Activated T-helper 1 cell treated with anti-CD3 and anti-CD28 coated beads, Interleukin-12 subunit alpha, Interleukin-12 subunit beta, Interleukin-2, Interleukin-4 antibody, amounts not matched to agents 30 ng/mL and 10 ng/mL and 1 ng/mL, durations not matched to agents 14 hours and 24 hours and 36 hours (primary cell): ENCODE measurements at regions of chr9 and their contacts with region 1.

Region 1: DNA sequence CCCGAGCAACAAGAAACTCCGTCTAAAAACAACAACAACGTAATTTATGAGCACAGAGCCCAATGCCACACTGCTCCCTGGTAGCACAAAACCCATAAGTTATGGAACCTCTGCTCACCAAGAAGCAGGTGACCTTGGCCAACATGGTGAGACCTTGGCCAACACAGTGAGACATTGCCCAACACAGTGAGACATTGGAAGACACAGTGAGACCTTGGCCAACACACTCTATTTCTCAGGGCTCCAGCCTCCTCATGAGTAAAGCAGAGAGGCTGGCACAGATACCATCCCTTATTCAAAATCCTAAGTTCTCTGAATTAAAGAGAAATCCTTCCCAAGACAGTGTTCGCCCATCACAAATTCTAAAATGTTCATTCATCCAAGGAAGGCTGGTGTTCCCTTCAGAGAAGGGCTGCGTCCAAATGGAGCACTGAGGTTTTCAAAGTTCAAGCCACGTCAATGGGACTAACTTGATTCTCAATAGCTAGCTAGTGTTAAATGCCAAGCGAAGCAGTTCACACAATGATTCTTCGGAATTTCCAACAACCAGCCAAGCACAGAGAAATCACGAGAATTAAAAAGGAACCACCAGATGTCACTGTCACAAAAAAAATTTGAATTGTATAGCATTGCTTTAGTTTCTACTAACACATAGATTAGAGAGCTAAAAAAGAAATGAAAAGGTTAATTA is 29.5 kb downstream of the TTC39B start:
- DNase-seq: no peak
- H3K4me3 Mint-ChIP-seq: no peak overlapping the region
- H3K27ac Mint-ChIP-seq: peak overlapping the region; percentile 60
- H3K4me1 Mint-ChIP-seq: peaks cover 28% of the 10 kb centered on the region
- H3K27me3 Mint-ChIP-seq: no peaks in the 10 kb centered on the region

Region 2: DNA sequence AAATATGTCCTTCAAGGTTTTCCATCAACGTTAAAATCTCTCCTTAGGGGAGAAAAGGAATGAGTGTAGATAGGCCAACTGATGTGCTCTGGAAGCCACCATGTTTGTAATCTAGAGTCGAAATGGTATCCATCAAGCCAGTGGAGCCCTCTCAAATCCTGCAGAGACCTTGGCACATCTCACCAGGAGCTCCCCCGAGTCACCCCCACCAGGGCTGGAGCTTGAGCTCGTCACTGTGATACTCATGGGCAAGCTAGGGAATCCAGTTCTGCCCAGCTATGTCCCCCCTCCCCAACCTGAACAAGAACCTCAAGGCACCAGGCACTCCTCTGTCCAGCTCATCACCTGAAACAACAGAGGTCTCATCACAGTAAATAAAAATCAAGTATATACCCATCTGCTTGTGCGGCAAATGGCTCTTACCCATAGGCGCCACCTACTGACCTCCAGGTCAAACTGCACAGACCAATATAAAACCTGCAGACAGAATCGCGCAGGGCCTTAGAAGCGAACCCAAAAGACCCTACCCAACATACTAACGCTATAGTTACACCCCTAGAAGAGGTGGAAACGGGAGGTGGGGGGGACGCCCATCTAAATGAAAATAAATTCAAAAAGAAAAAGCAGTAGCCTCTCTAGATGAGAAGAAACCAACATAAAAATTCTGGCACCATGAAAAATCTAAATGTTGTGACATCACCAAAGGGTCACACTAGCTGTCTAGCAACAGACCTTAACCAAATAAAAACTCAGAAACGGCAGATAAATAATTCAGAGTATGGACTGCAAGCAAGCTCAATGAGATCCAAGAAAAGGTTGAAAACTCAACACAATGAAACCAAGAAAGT is 45.5 kb before region 1 on chr9:
- intact Hi-C with region 1: loop called (anchors 5 kb)
- DNase-seq: no peak
- H3K4me3 Mint-ChIP-seq: no peak overlapping the region
- H3K27ac Mint-ChIP-seq: peak overlapping the region; percentile 37
- H3K4me1 Mint-ChIP-seq: peaks cover 35% of the 10 kb centered on the region
- H3K27me3 Mint-ChIP-seq: no peaks in the 10 kb centered on the region

Region 3: DNA sequence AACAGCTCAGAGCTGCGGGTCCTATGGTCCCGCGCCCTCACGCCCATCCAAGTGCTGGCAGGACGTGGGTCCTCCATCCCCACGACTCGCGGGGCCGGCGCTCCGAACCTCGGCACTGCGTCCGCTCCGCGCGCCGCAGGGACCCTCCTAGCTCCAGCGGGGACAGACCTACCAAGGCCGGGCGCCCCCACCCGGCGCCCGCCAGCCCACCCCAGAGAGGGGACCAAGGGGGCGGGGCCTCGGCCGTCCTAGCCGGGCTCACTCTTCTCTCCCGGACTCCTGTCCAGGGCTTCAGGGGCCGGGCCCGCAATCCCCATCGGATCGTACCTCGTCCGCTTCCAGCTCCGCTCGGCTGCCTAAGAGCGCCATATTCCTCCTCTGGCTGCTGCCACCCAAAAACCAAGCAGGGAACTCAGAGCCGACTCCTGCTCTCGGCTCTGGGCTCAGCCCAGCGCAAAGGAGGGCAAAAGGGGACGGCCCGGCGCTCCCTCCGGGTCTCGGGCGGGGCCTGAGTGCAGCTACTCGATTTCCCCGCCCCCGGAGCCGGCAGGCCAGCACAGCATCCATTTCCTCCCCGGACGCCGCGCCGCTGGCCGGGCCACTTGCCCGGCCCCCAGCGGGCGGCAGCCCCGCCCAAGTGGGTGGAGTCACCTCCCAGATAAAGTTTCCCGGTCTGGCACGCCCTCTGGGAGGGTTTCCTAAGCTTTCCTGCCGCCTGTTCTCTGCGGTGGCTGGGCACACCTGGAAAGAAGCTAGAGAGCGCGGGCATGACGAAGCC is 29.4 kb after region 1 on chr9 and contains the start of gene TTC39B:
- intact Hi-C with region 1: loop called (anchors 1 kb)
- DNase-seq: peak; percentile 82
- H3K4me3 Mint-ChIP-seq: peak within 1 kb of the TSS; percentile 98
- H3K27ac Mint-ChIP-seq: peak within 1 kb of the TSS; percentile 95
- H3K4me1 Mint-ChIP-seq: peaks cover 57% of the 10 kb centered on the region
- H3K27me3 Mint-ChIP-seq: no peaks in the 10 kb centered on the region
- total RNA-seq, gene TTC39B: 23.8 and 26.1 TPM in 2 replicates

Region 4: DNA sequence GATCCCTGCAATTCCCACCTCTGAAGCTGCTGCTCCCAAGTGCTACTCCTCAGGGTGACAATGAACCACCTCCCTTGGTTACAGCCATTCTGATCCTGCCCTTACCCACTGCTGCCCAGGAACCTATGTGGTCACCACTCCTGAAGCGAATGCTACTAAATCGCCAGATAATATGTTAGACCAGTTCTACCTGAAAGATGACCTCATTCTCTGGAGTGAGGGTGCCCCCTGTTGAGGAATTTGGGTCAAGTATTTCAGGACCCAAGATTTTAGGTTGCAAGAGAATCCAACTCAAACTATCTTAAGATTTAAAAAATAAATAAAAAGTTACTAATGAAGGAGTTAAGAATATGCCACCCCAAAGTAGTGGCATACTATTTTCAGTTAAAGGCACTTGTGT is 139.3 kb after region 1 on chr9:
- intact Hi-C with region 1: loop called (anchors 1 kb)
- DNase-seq: no peak
- H3K4me3 Mint-ChIP-seq: no peak overlapping the region
- H3K27ac Mint-ChIP-seq: no peak overlapping the region
- H3K4me1 Mint-ChIP-seq: peaks cover 6% of the 10 kb centered on the region
- H3K27me3 Mint-ChIP-seq: peaks cover 4% of the 10 kb centered on the region

Region 5: DNA sequence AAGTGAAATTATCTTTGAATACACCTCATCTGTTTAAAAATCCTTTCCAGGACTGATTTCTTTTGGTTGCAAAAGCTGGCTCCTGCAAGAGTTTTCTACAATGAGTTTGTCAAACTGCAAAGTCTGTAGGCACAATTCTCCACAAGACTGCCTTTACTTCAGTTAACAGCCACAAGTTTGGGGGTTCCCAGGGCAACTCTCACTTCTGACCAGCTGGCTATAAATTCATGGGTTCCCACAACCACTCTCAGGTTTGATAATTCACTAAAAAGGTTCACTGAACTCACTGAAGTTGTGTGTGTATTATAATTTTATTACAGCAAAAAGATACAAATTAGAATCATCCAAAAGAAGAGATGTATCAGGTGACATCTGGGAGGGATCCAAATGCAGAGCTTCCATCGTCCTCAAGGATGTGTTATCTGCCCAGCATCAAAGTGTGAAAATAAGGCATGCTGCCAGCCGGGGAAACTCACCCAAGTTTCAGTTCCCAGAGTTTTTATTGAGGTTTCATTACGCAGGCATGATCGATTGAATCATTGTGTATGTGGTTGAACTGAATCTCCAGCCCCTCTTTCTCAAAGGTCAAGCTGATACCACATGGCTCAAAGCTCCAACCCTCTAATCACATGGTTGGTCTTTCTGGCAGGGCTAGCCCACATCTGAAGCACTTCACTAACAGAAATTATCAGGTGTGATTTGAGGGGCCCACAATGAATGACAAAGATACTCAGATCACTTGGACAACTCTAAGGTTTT is 252.2 kb after region 1 on chr9:
- intact Hi-C with region 1: loop called (anchors 1 kb)
- DNase-seq: no peak
- H3K4me3 Mint-ChIP-seq: no peak overlapping the region
- H3K27ac Mint-ChIP-seq: no peak overlapping the region
- H3K4me1 Mint-ChIP-seq: no peaks in the 10 kb centered on the region
- H3K27me3 Mint-ChIP-seq: peaks cover 4% of the 10 kb centered on the region